Activated CD4-positive, alpha-beta T cell treated with anti-CD3 and anti-CD28 coated beads, Interleukin-2, amount 10 ng/mL, durations not matched to agents 24 days and 14 days (primary cell): ENCODE measurements at regions of chr6 and their contacts with region 1.

Region 1: DNA sequence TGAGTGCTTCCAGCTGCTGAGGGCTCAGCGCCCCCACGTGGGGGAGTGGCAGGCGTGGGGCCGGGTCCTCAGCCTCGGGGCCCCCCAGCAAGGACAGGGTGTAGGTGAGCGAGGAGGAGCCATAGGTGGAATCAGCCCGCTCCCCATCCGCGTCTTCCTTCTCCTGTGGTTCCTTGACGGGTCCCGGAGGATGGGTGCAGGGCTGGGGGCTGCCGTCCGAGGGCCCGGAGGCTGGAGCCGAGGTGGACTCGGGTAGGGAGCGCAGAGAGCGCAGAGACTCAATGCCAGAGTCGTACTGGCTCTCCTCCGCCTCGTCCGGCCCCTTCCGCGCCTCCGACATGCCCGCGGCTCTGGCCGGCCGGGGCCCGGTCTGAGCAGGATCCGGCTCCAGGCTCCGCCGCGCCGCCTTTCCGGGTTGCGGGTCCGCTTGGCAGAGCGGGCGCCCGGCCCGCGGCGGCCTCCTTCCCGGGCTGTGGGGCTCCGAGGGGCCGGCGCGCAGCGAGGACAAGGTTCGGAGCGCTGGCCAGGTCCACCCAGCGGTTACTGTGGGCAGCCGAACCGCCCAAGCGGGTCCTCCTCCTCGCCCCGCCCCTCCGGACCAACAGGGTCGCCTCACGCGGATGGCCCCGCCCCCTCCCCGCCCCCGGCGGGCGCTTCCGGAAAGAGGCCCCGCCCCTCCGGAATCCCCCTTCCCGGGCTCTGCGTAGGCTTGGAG is at the start of gene NFKBIE:
- DNase-seq: peak; percentile 98
- H3K4me3 Mint-ChIP-seq: peak within 1 kb of the TSS; percentile 100
- H3K27ac Mint-ChIP-seq: peak within 1 kb of the TSS; percentile 97
- H3K4me1 Mint-ChIP-seq: peaks cover 59% of the 10 kb centered on the region
- H3K27me3 Mint-ChIP-seq: peaks cover 19% of the 10 kb centered on the region
- total RNA-seq, gene NFKBIE: 27.6 and 28.2 TPM in 2 replicates

Region 2: DNA sequence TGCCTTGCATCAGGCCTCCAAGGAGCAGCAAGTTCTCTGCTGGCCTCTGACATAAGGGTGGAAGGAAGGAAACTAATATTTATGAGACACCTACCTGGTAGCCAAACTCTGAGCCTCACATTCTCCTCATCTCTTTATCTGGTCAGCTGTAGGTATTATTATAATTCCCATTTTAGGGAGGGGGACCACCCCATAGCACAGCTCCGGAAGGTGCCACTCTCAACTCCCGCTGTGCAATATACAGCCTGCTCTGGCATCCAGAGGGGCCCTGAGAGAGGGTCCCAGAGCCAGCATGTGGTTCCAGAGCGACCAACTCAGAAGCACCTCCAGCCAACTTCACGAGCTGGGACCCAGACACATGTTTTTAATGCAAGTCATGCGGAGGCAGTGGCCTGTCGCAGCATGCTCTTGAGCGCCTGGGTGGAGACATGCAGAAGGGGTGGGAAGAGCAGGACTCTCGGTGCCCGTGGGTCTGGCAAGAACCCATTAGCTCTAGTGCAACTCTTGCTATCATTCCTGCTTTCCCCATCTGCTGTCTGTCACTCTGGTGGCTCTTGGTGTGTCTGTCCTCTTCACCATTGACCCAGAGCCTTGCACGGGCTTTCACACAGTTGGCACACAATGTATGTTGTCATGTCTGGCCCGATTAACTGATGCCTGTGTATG is 63.4 kb before region 1 on chr6:
- intact Hi-C with region 1: no loop called
- DNase-seq: no peak
- H3K4me3 Mint-ChIP-seq: no peak overlapping the region
- H3K27ac Mint-ChIP-seq: no peak overlapping the region
- H3K4me1 Mint-ChIP-seq: no peaks in the 10 kb centered on the region
- H3K27me3 Mint-ChIP-seq: peaks cover 9% of the 10 kb centered on the region

Region 3: GRCh38 chr6:44234101-44235025 is 30.8 kb before region 1 on chr6:
- intact Hi-C with region 1: no loop called
- DNase-seq: no peak
- H3K4me3 Mint-ChIP-seq: no peak overlapping the region
- H3K27ac Mint-ChIP-seq: no peak overlapping the region
- H3K4me1 Mint-ChIP-seq: peaks cover 31% of the 10 kb centered on the region
- H3K27me3 Mint-ChIP-seq: no peaks in the 10 kb centered on the region

Region 4: GRCh38 chr6:44246663-44247337 is 18.4 kb before region 1 on chr6 and contains the start of gene HSP90AB1:
- intact Hi-C with region 1: loop called (anchors 1 kb)
- DNase-seq: peak; percentile 99
- H3K4me3 Mint-ChIP-seq: peak within 1 kb of the TSS; percentile 92
- H3K27ac Mint-ChIP-seq: peak within 1 kb of the TSS; percentile 98
- H3K4me1 Mint-ChIP-seq: peaks cover 40% of the 10 kb centered on the region
- H3K27me3 Mint-ChIP-seq: peaks cover 3% of the 10 kb centered on the region
- total RNA-seq, gene HSP90AB1: 2,450 and 2,479 TPM in 2 replicates

Region 5: DNA sequence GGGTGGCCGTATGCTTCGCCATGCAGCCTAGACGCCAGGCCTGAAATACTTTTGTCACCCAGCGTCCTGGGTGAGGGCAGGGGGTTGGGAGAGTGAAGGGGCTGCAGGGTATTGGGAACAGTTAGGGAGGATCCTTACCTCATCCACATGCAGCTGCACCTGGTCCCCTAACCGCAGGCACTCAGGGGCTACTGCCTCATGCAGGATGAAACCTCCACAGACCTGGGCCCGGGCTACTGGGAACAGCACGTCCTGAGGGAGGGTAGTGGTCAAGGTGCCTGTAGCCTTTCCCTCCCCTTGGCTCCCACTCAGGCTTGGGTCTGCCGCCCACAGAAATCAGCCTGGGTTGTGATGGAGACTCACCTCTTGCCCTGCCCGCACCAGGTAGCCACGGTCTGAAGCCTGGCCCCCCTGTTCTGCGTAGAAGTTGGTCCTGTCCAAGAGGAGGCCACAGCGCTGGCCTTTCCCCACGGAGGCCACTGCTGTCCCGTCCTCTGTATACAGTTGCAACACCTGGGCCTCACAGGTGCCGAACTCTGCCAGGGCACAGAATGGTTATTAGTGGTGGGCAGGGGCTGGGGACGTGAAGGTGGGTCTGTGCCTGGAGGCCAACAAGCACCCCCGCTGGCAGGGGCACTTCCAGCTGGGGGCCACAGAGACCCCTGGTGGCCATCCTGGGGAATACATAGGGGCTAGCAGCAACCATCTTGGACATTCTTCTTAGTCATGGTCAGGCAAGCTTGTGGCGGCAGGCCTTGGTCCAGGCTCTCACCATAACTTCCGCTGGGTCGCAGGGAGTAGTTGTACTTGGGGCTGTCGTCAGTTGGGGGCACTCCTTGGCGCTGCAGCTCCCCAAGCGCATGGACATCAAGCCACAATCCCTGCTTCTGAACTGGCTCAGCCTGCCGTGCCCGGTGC is 39.4 kb after region 1 on chr6:
- intact Hi-C with region 1: loop called (anchors 1 kb)
- DNase-seq: peak; percentile 80
- H3K4me3 Mint-ChIP-seq: no peak overlapping the region
- H3K27ac Mint-ChIP-seq: no peak overlapping the region
- H3K4me1 Mint-ChIP-seq: no peaks in the 10 kb centered on the region
- H3K27me3 Mint-ChIP-seq: no peaks in the 10 kb centered on the region

Region 6: DNA sequence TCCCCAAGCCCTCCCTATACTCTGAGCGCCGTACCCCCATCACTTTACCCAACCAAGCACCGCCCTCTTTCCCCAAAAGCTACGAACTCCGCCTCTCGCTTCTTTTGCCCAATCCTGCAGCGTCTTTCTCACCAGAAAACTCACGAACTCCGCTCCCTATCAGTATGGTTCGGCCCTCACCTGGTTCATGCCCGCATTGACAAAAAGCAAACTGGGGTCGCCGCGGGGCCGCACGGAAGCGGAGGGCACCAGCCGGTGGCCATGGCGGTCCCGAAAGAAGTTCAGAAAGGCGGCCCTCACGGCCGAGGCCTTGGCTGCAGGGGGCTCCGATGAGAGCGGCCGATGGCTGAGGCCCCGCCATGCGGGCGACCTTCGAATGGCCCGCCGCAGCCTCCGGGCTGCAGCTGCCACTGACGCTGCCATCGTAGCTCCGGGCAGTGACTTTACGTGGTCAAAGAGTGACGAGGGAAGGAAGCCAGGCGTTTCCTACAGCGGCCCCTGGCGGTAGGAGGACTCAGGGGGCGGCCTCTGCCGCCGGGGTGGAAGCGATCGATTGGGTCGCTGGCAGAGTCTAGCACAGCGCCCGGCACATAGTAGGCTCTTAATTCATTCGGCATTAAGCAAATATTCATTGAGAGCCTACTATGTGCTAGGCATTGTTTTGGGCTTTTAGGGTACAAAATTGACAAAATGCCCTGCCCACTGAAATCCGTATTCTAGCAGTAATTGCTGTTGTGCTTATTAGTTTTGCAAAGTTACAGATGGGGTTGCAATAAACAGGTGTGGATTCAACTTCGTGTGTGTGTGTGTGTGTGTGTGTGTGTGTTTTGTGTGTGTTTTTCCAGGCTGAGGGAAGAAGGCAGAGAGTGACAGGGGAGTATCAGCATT is 48.0 kb after region 1 on chr6 and contains the start of gene AARS2:
- intact Hi-C with region 1: loop called (anchors 1 kb)
- DNase-seq: peak; percentile 98
- H3K4me3 Mint-ChIP-seq: peak within 1 kb of the TSS; percentile 96
- H3K27ac Mint-ChIP-seq: peak within 1 kb of the TSS; percentile 97
- H3K4me1 Mint-ChIP-seq: peaks cover 16% of the 10 kb centered on the region
- H3K27me3 Mint-ChIP-seq: peaks cover 10% of the 10 kb centered on the region
- total RNA-seq, gene AARS2: 22.4 and 23.7 TPM in 2 replicates

Region 7: DNA sequence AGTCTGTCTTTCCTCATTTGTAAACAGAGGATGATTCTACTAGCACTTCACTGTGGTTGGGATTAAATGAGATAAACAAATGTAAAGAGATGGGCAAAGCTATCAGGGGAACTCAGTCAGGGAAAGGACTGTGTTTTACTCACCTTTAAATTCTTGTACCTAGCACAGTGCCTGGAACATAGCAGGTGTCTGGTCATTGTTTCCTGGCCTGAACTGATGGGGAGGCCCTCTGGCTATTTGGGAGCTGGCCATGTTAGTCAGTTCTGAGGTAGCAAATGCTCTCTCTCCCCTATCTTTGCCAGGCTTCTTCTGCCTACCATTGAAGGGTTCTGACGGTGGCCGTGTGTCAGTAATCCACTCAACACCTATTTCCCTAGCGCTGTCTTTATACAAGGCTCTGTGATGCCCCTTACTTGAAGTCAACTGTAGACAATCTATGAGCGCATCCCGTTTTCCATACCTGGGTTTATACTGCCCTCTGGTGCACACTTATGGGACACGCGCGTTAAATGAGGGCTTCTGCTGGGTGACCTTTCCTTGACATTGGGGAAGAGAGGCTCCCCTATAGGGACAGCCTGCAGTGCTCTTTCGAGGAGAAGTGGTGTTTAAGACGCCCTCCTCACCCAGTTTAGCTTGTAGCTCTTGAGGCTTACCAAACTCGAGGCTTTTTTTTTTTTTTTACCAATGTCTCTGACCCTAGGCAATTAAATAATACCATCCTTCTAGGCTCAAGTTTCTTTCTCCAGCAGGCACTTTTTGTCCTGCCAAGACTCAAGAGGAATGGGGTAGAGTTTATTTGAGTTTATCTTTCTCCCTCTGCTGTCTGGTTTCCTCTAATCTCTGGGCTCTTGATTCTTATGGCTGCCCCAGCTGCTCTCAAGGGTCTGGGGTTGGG is 73.3 kb after region 1 on chr6:
- intact Hi-C with region 1: loop called (anchors 1 kb)
- DNase-seq: peak; percentile 91
- H3K4me3 Mint-ChIP-seq: no peak overlapping the region
- H3K27ac Mint-ChIP-seq: no peak overlapping the region
- H3K4me1 Mint-ChIP-seq: no peaks in the 10 kb centered on the region
- H3K27me3 Mint-ChIP-seq: peaks cover 30% of the 10 kb centered on the region

Region 8: DNA sequence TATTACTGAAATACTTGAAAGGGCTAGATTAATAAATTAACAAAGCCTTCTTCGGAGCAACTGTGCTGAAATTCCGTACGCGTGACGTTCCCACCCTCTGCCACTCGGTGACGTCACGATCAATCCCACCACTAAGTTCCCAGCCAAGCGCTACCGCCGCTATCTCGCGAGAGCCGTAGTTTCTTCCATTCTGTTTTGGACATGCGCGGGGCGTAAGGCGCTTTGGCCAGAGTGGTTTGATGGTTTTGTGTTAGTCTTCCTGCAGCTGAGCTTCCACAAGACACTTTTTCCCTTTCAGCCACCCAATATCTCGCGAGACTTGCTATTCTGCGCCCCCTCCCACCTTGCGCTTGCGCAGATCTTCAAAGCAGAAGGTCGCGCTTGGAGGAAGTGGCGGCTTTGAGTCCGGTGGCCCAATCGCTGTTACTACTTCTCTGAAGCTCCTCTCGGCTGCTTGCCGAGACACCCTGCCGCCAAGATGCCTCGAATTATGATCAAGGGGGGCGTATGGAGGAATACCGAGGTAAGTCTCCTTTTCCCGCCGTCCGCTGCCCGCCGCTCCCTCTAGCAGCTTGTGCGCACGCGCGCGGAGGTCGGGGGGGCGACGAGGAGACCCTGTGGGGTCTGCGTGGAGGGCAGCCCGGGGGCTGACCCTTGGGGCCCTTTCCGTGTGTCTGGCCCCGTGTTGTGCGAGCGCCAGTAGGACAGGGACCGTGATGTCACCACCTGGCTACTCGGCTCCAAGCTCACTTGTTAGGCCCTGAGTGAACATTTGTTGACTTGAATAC is 122.4 kb after region 1 on chr6 and contains the start of gene CDC5L:
- intact Hi-C with region 1: loop called (anchors 2 kb)
- DNase-seq: peak; percentile 98
- H3K4me3 Mint-ChIP-seq: peak within 1 kb of the TSS; percentile 98
- H3K27ac Mint-ChIP-seq: peak within 1 kb of the TSS; percentile 98
- H3K4me1 Mint-ChIP-seq: peaks cover 32% of the 10 kb centered on the region
- H3K27me3 Mint-ChIP-seq: peaks cover 15% of the 10 kb centered on the region
- total RNA-seq, gene CDC5L: 25.5 and 26.5 TPM in 2 replicates

Region 9: DNA sequence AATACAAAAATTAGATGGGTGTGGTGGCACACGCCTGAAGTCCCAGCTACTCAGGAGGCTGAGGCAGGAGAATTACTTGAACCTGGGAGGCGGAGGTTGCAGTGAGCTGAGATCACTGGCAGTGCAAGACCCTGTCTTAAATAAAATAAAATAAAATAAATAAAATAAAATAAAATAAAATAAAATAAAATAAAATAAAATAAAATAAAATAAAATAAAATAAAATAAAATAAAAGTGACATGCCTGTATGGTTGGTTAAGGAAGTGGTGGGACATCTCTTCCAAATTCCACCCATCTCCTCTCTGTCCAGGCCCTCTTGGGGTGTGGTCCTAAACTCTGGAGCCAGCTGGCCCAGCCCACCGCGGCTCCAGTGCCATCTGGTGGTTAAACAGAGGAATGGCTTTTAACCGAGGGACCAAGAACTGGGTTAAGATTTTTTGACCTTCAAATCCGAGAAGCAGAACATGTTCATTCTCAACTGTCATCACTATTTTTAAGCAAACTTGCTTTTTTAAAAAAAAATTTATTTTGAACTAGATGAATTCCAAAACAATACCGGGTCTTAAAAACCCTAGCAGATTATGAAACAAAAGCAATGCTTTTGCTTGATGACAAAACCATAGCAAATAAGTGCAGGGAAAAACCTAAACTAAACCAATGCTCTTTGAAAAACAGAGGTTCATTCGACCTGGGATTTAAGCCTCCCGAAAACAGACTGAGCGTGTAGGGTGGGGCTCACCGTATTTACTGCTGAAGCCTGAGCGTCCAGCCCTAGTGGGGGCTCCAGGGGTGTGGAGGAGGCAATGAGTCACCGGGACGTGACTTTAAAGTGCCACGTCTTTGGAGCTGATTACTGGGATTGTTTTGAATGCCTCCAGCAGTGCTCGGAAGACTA is 191.2 kb after region 1 on chr6:
- intact Hi-C with region 1: loop called (anchors 2 kb)
- DNase-seq: peak; percentile 79
- H3K4me3 Mint-ChIP-seq: no peak overlapping the region
- H3K27ac Mint-ChIP-seq: no peak overlapping the region
- H3K4me1 Mint-ChIP-seq: no peaks in the 10 kb centered on the region
- H3K27me3 Mint-ChIP-seq: no peaks in the 10 kb centered on the region